ENCODE measurements at regions of chr2 and their contacts with region 1.

Region 1: GRCh38 chr2:201246280-201246679 is 14.1 kb upstream of the CASP8 start:
- DNase-seq: no peak
- ATAC-seq: no peak
- H3K4me3 ChIP-seq: no peak overlapping the region
- H3K4me3 Mint-ChIP-seq: no peak overlapping the region
- H3K27ac ChIP-seq: no peak overlapping the region
- H3K27ac Mint-ChIP-seq: peak overlapping the region; percentile 78 to 82
- H3K4me1 ChIP-seq: peaks cover 8 to 21% of the 10 kb centered on the region in 2 experiments
- H3K4me1 Mint-ChIP-seq: peaks cover 83 to 88% (median 87%) of the 10 kb centered on the region in 3 donors
- H3K27me3 ChIP-seq: no peaks in the 10 kb centered on the region
- H3K27me3 Mint-ChIP-seq: no peaks in the 10 kb centered on the region

Region 2: DNA sequence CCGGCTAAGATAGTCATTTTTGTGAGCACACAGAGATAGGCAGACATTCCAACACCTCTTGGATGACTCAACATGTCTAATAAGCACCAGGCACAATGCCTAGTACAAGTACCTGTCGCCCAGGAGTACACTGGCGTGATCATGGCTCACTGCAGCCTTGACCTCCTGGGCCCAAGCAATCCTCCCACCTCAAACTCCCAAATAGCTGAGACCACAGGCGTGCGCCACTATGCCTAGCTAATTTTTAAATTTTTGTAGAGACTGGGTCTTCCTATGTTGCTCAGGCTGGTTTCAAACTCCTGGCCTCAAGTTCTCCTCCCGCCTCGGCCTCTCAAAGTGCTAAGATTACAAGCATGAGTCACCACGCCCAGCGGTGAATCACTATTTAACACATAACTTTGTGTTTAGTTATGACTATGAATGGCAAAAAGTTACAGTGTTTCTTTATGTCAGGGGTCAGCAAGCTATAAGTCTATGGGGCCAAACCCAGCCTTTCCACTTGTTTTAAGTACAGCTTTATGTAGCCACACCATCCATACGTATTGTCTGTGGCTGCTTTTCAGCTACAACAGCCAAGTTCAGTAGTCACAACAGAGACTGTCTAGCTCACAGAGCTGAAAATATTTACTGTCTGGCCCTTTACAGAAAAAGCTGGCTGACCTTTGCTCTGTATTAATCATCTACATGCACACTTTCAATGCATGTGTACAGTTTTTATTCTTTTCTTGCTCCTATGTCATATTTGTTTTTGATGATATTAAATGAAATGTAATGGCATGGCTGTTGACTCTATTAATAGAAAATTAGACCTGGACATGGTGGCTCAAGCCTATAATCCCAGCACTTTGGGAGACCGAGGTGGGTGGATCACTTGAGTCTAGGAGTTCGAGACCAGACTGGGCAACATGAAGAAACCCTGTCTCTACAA is 301.5 kb before region 1 on chr2:
- CTCF ChIA-PET with region 1: no interaction called
- POLR2A ChIA-PET with region 1: no interaction called
- DNase-seq: peak in 1 of 35 experiments; percentile 5
- ATAC-seq: no peak
- H3K4me3 ChIP-seq: no peak overlapping the region
- H3K4me3 Mint-ChIP-seq: no peak overlapping the region
- H3K27ac ChIP-seq: no peak overlapping the region
- H3K27ac Mint-ChIP-seq: peak overlapping the region in 1 of 2 donors; percentile 22
- H3K4me1 ChIP-seq: no peaks in the 10 kb centered on the region
- H3K4me1 Mint-ChIP-seq: peaks cover 5 to 6% (median 5%) of the 10 kb centered on the region in 3 donors
- H3K27me3 ChIP-seq: no peaks in the 10 kb centered on the region
- H3K27me3 Mint-ChIP-seq: no peaks in the 10 kb centered on the region

Region 3: GRCh38 chr2:201220102-201220570 is 26.1 kb before region 1 on chr2:
- CTCF ChIA-PET with region 1: no interaction called
- POLR2A ChIA-PET with region 1: no interaction called
- DNase-seq: peak in 6 of 35 experiments; percentile 11 to 27 (median 18)
- ATAC-seq: peak in 3 of 4 experiments; percentile 23 to 45 (median 29)
- H3K4me3 ChIP-seq: no peak overlapping the region
- H3K4me3 Mint-ChIP-seq: peak overlapping the region in 1 of 3 donors; percentile 36
- H3K27ac ChIP-seq: no peak overlapping the region
- H3K27ac Mint-ChIP-seq: peak overlapping the region; percentile 80 to 83
- H3K4me1 ChIP-seq: peaks cover 12 to 19% of the 10 kb centered on the region in 2 experiments
- H3K4me1 Mint-ChIP-seq: peaks cover 43 to 57% (median 53%) of the 10 kb centered on the region in 3 donors
- H3K27me3 ChIP-seq: no peaks in the 10 kb centered on the region
- H3K27me3 Mint-ChIP-seq: no peaks in the 10 kb centered on the region

Region 4: DNA sequence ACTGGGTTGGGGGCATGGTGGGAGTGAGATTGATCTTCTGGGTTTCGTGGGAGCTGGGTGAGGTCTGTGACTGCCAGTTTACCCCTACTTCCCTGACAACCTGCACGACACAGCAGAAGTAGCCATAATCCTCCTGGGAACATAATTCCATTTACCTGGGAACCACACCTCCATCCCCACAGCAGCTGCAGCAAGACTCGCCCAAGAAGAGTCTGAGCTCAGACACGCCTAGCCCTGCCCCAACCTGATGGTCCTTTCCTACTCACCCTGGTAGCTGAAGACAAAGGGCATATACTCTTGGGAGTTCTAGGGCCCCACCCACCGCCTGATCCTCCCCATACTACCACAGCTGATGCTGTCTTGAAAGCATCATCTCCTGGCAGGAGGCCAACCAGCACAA is 67.1 kb after region 1 on chr2:
- CTCF ChIA-PET with region 1: no interaction called
- POLR2A ChIA-PET with region 1: no interaction called
- DNase-seq: no peak
- ATAC-seq: no peak
- H3K4me3 ChIP-seq: no peak overlapping the region
- H3K4me3 Mint-ChIP-seq: no peak overlapping the region
- H3K27ac ChIP-seq: no peak overlapping the region
- H3K27ac Mint-ChIP-seq: no peak overlapping the region
- H3K4me1 ChIP-seq: no peaks in the 10 kb centered on the region
- H3K4me1 Mint-ChIP-seq: no peaks in the 10 kb centered on the region
- H3K27me3 ChIP-seq: no peaks in the 10 kb centered on the region
- H3K27me3 Mint-ChIP-seq: no peaks in the 10 kb centered on the region

Region 5: DNA sequence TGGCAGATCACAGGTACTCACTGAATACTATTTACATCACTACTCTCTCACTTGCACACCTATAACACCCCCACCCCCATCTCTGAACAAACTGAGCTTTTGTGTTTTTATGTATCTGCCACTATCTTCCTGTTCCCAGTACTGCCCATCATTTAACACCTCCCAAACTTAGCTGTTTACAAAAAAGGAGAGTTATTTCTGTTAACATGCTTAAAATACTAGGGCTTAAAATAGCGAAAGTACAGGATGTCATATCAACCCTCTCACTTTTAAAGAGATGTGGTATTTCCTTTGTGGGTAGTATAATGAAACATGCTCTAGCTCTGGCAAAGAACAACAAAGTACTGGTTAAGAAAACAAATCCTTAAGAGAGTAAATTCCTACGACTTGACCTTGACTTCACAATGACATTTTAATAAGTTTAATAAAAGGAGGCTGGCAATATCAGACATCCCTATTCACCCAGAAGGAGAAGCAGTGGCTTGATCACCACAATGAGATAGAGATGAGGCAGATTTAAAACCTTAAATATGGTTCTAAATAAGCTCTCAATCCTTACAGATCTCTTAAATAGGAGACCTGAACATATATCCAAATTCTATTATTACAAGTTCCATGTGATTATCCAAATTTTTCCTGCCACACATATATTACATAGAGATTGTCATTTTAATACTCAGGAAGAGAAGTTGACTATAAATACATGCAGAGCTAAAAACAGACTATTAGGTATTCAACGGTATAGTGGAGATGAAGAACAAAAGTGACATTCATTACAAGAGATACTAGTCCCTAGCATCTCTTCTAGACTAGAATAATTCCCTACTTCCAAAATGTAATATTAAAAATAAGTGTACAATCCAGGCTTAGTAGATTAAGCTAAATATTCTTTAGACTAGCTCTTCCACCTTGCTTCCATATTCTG is 168.1 kb after region 1 on chr2:
- CTCF ChIA-PET with region 1: interaction called in 1 of 2 experiments, 10 read pairs
- POLR2A ChIA-PET with region 1: no interaction called
- DNase-seq: peak in 1 of 35 experiments; percentile 42
- ATAC-seq: peak; percentile 81 to 90 (median 86)
- H3K4me3 ChIP-seq: peak overlapping the region in 1 of 2 donors; percentile 2
- H3K4me3 Mint-ChIP-seq: no peak overlapping the region
- H3K27ac ChIP-seq: peak overlapping the region; percentile 65
- H3K27ac Mint-ChIP-seq: no peak overlapping the region
- H3K4me1 ChIP-seq: peaks cover 12 to 26% of the 10 kb centered on the region in 2 experiments
- H3K4me1 Mint-ChIP-seq: peaks cover 29 to 41% (median 32%) of the 10 kb centered on the region in 3 donors
- H3K27me3 ChIP-seq: no peaks in the 10 kb centered on the region
- H3K27me3 Mint-ChIP-seq: no peaks in the 10 kb centered on the region

Region 6: DNA sequence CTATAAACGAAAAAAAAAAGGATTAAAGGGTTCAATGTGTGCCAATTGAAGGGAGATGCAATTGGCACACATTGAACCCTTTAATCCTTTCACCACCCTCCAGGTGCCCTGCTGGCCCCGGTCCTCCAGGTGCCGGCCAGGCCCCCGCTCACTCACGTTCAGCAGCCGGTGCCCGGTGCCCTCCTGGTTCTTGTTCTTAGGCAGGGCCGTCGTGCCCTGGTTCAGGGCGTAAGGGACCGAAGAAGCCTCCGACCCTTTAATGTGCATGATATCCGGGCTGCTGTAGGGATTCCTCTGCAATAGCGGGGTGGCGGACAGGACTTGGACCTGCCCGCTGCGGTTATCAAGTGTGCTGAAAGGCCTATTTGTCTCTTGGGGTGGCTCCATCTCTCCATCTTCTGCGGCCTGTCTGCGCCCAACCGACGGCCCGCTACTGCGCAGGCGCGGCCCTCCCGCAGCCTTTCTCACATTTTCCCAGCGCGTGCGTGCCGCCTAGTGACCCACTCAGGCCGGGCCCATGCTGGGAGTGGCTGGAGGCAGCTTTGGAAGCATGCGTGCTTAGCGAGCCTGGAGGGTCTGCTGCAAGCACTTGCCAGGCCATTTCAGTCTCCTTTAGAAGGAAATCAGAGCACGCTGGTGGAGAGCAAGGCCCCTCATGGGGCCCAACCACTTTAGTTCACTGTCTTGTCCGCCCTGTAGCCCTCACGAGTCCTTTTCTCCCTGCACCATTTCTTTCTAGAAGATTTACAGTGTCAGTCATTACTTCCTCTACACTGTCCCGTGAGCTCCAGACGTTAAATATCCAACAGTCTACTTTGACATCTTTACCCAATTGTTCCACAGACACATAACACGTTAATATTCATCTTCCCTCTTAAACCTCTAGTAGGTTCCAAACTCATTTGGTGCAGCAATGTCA is 372.7 kb after region 1 on chr2:
- CTCF ChIA-PET with region 1: no interaction called
- POLR2A ChIA-PET with region 1: no interaction called
- DNase-seq: no peak
- ATAC-seq: no peak
- H3K4me3 ChIP-seq: no peak overlapping the region
- H3K4me3 Mint-ChIP-seq: no peak overlapping the region
- H3K27ac ChIP-seq: no peak overlapping the region
- H3K27ac Mint-ChIP-seq: no peak overlapping the region
- H3K4me1 ChIP-seq: no peaks in the 10 kb centered on the region
- H3K4me1 Mint-ChIP-seq: no peaks in the 10 kb centered on the region
- H3K27me3 ChIP-seq: no peaks in the 10 kb centered on the region
- H3K27me3 Mint-ChIP-seq: peaks cover 0 to 1% of the 10 kb centered on the region in 2 donors